ENCODE measurements at regions of chr2 and their contacts with region 1.

Region 1: DNA sequence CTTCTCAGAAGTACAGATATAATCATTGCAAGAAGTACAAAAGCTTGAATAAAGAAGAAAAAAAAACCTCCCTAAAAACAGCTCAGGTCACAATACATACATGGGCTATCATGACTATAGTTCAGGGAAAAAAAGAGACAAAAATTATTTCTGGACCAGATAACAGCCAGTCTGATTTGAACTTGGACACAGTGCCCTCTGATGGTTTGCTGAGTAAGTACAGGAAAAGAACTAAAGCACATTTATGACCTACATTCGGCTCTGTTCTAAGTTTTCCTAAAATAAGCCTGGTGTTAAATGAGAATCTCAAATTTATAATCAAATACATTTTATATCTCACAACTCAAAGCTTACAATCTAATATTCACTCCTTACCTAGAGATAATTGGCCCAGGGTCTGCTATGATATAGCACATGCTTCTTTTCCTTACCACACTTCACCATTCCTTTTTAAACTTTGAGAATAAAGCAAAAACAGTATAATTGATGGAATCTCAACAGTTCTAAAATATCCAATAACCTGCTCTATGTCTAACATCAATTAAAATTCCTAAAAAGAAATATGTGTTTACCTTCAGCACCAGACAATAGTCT is 81.1 kb downstream of the RAPH1 start:
- DNase-seq: peak; percentile 67
- ATAC-seq: peak; percentile 76
- H3K4me3 ChIP-seq: no peak overlapping the region
- H3K27ac ChIP-seq: no peak overlapping the region
- H3K4me1 ChIP-seq: peaks cover 20% of the 10 kb centered on the region
- H3K27me3 ChIP-seq: no peaks in the 10 kb centered on the region
- CTCF ChIP-seq: peak; percentile 89

Region 2: GRCh38 chr2:202577250-202578183 is 876.4 kb before region 1 on chr2:
- CTCF ChIA-PET with region 1: no interaction called
- POLR2A ChIA-PET with region 1: no interaction called
- intact Hi-C with region 1: loop called (anchors 5 kb)
- DNase-seq: no peak
- ATAC-seq: no peak
- H3K4me3 ChIP-seq: no peak overlapping the region
- H3K27ac ChIP-seq: no peak overlapping the region
- H3K4me1 ChIP-seq: no peaks in the 10 kb centered on the region; the same call in 1 of the 2 replicates
- H3K27me3 ChIP-seq: no peaks in the 10 kb centered on the region
- CTCF ChIP-seq: no peak

Region 3: DNA sequence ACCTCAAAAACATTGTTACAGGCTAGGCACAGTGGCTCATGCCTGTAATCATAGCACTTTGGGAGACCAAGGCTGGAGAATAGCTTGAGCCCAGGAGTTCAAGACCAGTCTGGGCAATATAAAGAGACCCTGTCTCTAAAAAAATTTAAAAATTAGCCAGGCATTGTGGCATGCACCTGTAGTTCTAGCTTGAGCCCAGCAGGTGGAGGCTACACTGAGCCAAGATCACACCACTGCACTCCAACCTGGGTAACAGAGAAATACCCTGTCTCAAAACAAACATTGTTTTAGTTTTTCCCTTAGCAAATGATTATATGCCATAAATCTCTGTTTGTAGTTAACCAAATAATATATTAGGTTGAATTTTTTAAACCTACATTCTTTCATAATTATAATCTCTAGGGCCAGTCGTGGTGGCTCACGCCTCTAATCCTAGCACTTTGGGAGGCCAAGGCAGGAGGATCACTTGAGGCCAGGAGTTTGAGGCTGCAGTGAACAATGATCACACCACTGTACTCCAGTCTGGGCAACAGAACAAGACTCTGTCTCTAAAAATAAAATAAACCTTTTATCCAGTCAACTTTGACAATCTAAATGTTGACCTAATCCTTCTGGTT is 228.4 kb before region 1 on chr2:
- CTCF ChIA-PET with region 1: no interaction called
- POLR2A ChIA-PET with region 1: no interaction called
- intact Hi-C with region 1: loop called (anchors 1 kb)
- DNase-seq: peak; percentile 52
- ATAC-seq: peak; percentile 77
- H3K4me3 ChIP-seq: no peak overlapping the region
- H3K27ac ChIP-seq: no peak overlapping the region
- H3K4me1 ChIP-seq: no peaks in the 10 kb centered on the region
- H3K27me3 ChIP-seq: no peaks in the 10 kb centered on the region
- CTCF ChIP-seq: peak; percentile 71

Region 4: GRCh38 chr2:203279305-203279704 is 174.7 kb before region 1 on chr2:
- CTCF ChIA-PET with region 1: no interaction called
- POLR2A ChIA-PET with region 1: no interaction called
- intact Hi-C with region 1: loop called (anchors 5 kb)
- DNase-seq: peak; percentile 44
- ATAC-seq: peak; percentile 77
- H3K4me3 ChIP-seq: no peak overlapping the region
- H3K27ac ChIP-seq: no peak overlapping the region
- H3K4me1 ChIP-seq: no peaks in the 10 kb centered on the region
- H3K27me3 ChIP-seq: no peaks in the 10 kb centered on the region
- CTCF ChIP-seq: peak; percentile 45

Region 5: DNA sequence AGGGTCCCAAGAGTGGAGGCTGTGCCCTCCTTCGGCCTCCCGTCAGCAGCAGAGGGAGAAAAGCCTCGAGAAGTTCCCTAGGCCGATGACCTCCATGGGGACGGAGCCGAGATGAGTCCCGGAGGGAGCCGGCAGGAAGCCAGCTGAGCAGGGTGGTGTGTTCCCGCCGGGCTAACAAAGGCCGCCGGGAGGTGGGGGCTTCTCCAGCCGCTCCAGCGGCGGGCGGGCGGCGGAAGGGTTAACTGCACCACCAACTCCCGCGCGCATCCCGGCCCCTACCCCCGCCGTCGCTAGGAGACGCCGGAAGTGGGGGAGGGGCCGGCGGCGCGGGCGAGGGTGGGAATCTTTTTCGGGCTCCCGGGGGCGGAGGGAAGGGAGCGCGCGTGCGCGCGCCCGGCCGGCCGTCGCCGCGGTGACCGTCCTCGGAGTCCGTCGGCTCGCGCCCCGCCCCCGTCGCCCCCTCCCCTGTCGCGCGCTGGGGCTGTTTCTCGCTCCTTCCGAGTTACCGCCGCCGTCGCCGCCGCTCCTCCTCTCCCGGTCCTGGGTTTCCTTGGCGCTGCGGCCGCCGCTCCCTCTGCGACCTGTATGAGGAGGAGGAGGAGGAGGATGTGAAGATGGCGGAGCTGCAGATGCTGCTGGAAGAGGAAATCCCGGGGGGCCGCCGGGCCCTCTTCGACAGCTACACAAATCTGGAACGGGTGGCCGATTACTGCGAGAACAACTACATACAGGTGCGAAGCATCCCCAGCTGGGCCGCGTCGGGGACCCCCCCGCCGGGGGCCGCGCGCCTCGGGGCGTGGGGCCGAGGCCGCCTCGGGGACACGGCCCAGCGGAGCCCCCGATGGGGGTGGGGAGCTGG is 125.8 kb before region 1 on chr2 and contains the start of gene ABI2:
- CTCF ChIA-PET with region 1: no interaction called
- POLR2A ChIA-PET with region 1: no interaction called
- intact Hi-C with region 1: loop called (anchors 5 kb)
- DNase-seq: peak; percentile 87
- ATAC-seq: peak; percentile 72
- H3K4me3 ChIP-seq: peak within 1 kb of the TSS; percentile 88
- H3K27ac ChIP-seq: peak within 1 kb of the TSS; percentile 74
- H3K4me1 ChIP-seq: peaks cover 18% of the 10 kb centered on the region
- H3K27me3 ChIP-seq: no peaks in the 10 kb centered on the region
- CTCF ChIP-seq: no peak
- total RNA-seq, gene ABI2: 37.6 and 50.7 TPM in 2 replicates

Region 6: DNA sequence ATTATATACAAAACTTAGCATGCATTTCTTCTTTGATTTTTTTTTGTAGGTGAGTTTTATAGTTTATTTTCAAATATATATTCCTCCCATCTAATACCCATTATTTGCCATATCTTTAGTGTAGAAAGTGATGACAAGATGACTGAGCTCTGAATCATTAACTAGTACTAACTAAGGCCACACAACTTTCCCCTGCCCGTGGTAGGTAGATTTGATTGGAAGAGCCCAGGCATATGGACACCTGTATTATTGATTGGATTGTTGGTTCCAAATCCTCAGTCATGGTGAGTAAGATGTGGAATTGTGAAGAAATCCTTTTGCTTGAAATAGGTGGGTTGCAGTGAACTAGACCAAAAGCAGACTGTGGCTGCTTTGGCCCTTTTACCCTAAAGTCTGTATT is 70.9 kb before region 1 on chr2:
- CTCF ChIA-PET with region 1: interaction called, 12 read pairs
- POLR2A ChIA-PET with region 1: no interaction called
- intact Hi-C with region 1: no loop called
- DNase-seq: peak; percentile 76
- ATAC-seq: peak; percentile 79
- H3K4me3 ChIP-seq: no peak overlapping the region
- H3K27ac ChIP-seq: 0 out of 2 replicates have a peak overlapping the region, but pooled peaks have one; percentile 7
- H3K4me1 ChIP-seq: peaks cover 22% of the 10 kb centered on the region
- H3K27me3 ChIP-seq: no peaks in the 10 kb centered on the region
- CTCF ChIP-seq: no peak

Region 7: GRCh38 chr2:203396667-203397066 is 57.3 kb before region 1 on chr2:
- CTCF ChIA-PET with region 1: no interaction called
- POLR2A ChIA-PET with region 1: no interaction called
- intact Hi-C with region 1: no loop called
- DNase-seq: no peak
- ATAC-seq: no peak
- H3K4me3 ChIP-seq: no peak overlapping the region
- H3K27ac ChIP-seq: no peak overlapping the region
- H3K4me1 ChIP-seq: peaks cover 30% of the 10 kb centered on the region
- H3K27me3 ChIP-seq: no peaks in the 10 kb centered on the region
- CTCF ChIP-seq: peak; percentile 66

Measured in PC-3 (cell line).